ENCODE measurements at regions of chr10 and their contacts with region 1.

Region 1: GRCh38 chr10:38010119-38010903 is at the start of gene ZNF33A:
- DNase-seq: peak; percentile 90 to 96
- H3K4me3 ChIP-seq: peak within 1 kb of the TSS; percentile 76 to 84
- H3K27ac ChIP-seq: peak within 1 kb of the TSS; percentile 97 to 99
- H3K4me1 ChIP-seq: peaks cover 0 to 13% (median 6%) of the 10 kb centered on the region in 4 donors
- H3K27me3 ChIP-seq: no peaks in the 10 kb centered on the region
- CTCF ChIP-seq: no peak

Region 2: GRCh38 chr10:37857287-37858211 is 152.8 kb before region 1 on chr10 and contains the start of gene ZNF248:
- intact Hi-C with region 1: loop called (anchors 10 kb)
- DNase-seq: peak; percentile 96 to 98
- H3K4me3 ChIP-seq: peak within 1 kb of the TSS; percentile 74 to 93
- H3K27ac ChIP-seq: peak within 1 kb of the TSS; percentile 97 to 100
- H3K4me1 ChIP-seq: peaks cover 0 to 29% (median 8%) of the 10 kb centered on the region in 4 donors
- H3K27me3 ChIP-seq: no peaks in the 10 kb centered on the region
- CTCF ChIP-seq: no peak

Region 3: GRCh38 chr10:37976091-37976879 is 34.0 kb before region 1 on chr10 and contains the start of gene ZNF25:
- intact Hi-C with region 1: loop called (anchors 1 kb)
- DNase-seq: peak; percentile 99
- H3K4me3 ChIP-seq: peak within 1 kb of the TSS; percentile 78 to 93
- H3K27ac ChIP-seq: peak within 1 kb of the TSS; percentile 98 to 99
- H3K4me1 ChIP-seq: peaks cover 0 to 16% (median 8%) of the 10 kb centered on the region in 4 donors
- H3K27me3 ChIP-seq: no peaks in the 10 kb centered on the region
- CTCF ChIP-seq: peak; percentile 90 to 92